ENCODE measurements at regions of chr10 and their contacts with region 1.

Region 1: DNA sequence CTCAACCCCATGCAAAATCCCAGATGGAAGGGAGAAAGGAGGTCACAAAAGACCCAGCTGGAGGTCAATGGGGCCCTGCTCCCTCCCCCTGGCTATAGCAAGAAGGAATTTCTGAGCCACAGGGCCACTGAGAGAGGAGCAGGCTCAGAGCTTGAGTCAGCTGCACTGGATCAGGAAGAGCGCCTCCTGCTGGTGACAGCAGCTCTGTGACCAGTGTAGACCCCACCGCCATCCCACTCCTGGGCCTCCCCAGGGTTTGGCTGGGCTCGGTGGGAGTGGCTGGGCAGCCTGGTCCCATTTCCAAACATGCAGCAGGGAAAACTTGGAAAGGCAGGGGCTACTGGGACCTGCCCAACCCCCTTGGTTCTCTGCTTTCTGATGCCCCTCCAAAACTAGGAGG is 31.5 kb upstream of the PRLHR start:
- DNase-seq: peak in 1 of 2 experiments; percentile 49
- H3K4me3 ChIP-seq: no peak overlapping the region
- H3K27ac ChIP-seq: no peak overlapping the region
- H3K4me1 ChIP-seq: peaks cover 0 to 7% (median 3%) of the 10 kb centered on the region in 4 experiments; a peak in 2 of 7 replicates
- H3K27me3 ChIP-seq: no peaks in the 10 kb centered on the region
- CTCF ChIP-seq: peak; percentile 51 to 75 (median 71)
- EP300 ChIP-seq: no peak
- POLR2A ChIP-seq: no peak
- RAD21 ChIP-seq: peak; percentile 16 to 44; a peak in 3 of 4 replicates

Region 2: GRCh38 chr10:118551535-118552100 is 75.3 kb before region 1 on chr10:
- CTCF ChIA-PET with region 1: no interaction called
- POLR2A ChIA-PET with region 1: no interaction called
- DNase-seq: no peak
- H3K4me3 ChIP-seq: no peak overlapping the region
- H3K27ac ChIP-seq: no peak overlapping the region
- H3K4me1 ChIP-seq: no peaks in the 10 kb centered on the region
- H3K27me3 ChIP-seq: no peaks in the 10 kb centered on the region
- CTCF ChIP-seq: no peak
- EP300 ChIP-seq: no peak
- POLR2A ChIP-seq: no peak
- RAD21 ChIP-seq: no peak

Region 3: GRCh38 chr10:118662228-118663035 is 35.5 kb after region 1 on chr10:
- CTCF ChIA-PET with region 1: interaction called, 22 read pairs
- POLR2A ChIA-PET with region 1: no interaction called
- DNase-seq: no peak
- H3K4me3 ChIP-seq: no peak overlapping the region
- H3K27ac ChIP-seq: no peak overlapping the region
- H3K4me1 ChIP-seq: no peaks in the 10 kb centered on the region; a peak in 1 of 7 replicates
- H3K27me3 ChIP-seq: no peaks in the 10 kb centered on the region
- CTCF ChIP-seq: no peak
- EP300 ChIP-seq: no peak
- POLR2A ChIP-seq: no peak
- RAD21 ChIP-seq: no peak

Region 4: DNA sequence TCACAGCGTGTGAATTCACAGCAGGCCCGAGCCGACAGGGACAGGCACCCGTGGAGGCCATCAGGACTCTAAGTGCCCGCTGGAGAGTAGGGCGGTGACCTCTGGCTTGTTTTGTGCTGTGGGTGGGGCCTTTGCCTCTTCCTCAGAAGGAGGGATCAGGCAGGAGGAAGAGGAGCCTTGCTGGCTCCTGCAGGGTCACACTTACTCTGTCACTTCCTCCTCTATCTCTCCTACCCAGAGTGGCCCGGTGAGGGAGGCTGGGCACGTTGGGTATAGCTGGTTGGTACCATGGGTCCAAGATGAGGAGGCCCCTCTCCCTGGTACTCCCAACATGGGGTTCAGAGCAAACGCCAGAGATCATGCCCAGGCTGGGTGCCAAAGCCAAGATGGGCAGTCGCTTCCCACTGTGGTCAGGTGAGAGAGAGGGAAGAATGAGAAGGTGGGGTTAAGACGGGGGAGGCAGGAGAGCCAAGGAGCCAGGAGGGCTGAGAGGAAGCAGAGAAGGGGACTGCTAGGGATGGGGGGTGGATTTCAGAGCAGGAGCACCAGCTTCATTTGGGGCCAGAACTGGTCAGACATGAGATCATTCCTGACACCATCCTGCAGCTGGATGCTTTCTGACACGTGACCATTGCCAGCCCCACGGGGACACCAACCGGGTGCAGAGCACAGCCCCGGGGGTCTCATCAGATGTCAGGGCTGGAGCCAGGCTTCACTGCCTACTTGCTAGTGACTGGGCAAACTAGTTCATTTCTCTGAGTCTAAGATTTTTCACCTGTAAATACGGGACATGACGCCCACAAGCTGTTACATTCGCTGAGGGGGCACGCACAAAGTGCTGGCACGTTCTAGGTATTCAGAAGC is 182.6 kb after region 1 on chr10:
- CTCF ChIA-PET with region 1: no interaction called
- POLR2A ChIA-PET with region 1: no interaction called
- DNase-seq: no peak
- H3K4me3 ChIP-seq: no peak overlapping the region
- H3K27ac ChIP-seq: no peak overlapping the region
- H3K4me1 ChIP-seq: peaks cover 0 to 3% (median 1%) of the 10 kb centered on the region in 4 experiments; a peak in 1 of 7 replicates
- H3K27me3 ChIP-seq: no peaks in the 10 kb centered on the region
- CTCF ChIP-seq: no peak
- EP300 ChIP-seq: no peak
- POLR2A ChIP-seq: no peak
- RAD21 ChIP-seq: no peak